WTC11 (cell line): ENCODE measurements at regions of chr22 and their contacts with region 1.

Region 1: DNA sequence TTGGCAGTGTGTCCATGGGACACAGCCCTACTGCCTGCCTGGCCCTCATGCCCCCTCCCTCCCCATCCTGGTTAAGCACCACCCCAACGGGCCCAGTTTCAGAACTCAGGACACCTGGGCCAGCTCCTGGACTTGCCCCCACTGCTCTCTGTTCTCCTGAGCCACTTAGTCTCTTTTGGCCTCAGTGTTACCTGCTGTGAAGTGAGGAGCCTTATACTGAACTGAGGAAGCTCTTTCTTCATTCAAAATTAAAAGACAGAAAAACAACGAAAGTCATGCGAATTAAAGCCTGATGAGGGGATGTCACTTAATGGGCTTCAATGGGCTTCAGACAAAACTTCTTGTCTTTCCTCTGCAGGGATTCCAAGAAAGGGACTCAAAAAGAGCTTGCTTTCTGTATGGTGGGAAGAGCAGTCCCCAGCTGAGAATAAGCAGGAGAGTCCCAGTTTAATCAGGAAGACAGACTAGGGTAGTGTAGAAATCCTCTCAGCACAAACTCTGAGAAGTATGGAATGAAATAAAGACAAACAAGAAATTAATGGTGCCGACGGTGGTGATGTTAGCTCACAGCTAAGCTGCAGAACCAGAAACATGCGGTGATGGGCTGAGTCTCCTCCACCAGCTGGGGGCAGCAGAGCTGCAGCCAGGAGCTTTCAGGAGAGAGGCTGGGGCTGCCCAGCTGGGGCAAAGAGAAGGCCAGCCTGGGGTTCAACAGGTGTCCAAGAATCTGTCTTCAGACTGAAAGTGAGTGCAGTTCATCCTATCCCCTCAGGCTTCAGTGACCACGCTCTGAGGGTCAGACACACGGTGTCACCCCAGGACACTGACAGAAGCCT is 101.0 kb downstream of the GGTLC2 start:
- DNase-seq: peak; percentile 74
- ATAC-seq: peak; percentile 86
- H3K4me3 Mint-ChIP-seq: no peak overlapping the region
- H3K27ac Mint-ChIP-seq: no peak overlapping the region
- H3K4me1 Mint-ChIP-seq: peaks cover 19% of the 10 kb centered on the region
- H3K27me3 Mint-ChIP-seq: peaks cover 91% of the 10 kb centered on the region
- CTCF ChIP-seq: peak; percentile 35; the same call in 1 of the 2 replicates

Region 2: GRCh38 chr22:22576244-22576988 is 169.0 kb before region 1 on chr22:
- CTCF ChIA-PET with region 1: interaction called, 11 read pairs
- POLR2A ChIA-PET with region 1: no interaction called
- DNase-seq: peak; percentile 84
- ATAC-seq: peak; percentile 96
- H3K4me3 Mint-ChIP-seq: no peak overlapping the region
- H3K27ac Mint-ChIP-seq: no peak overlapping the region
- H3K4me1 Mint-ChIP-seq: no peaks in the 10 kb centered on the region
- H3K27me3 Mint-ChIP-seq: peaks cover 97% of the 10 kb centered on the region
- CTCF ChIP-seq: peak; percentile 72

Region 3: GRCh38 chr22:22609291-22609690 is 136.2 kb before region 1 on chr22:
- CTCF ChIA-PET with region 1: no interaction called
- POLR2A ChIA-PET with region 1: no interaction called
- DNase-seq: no peak
- ATAC-seq: no peak
- H3K4me3 Mint-ChIP-seq: no peak overlapping the region
- H3K27ac Mint-ChIP-seq: no peak overlapping the region
- H3K4me1 Mint-ChIP-seq: peaks cover 9% of the 10 kb centered on the region
- H3K27me3 Mint-ChIP-seq: peaks cover 95% of the 10 kb centered on the region
- CTCF ChIP-seq: no peak

Region 4: GRCh38 chr22:22710719-22711531 is 34.5 kb before region 1 on chr22:
- CTCF ChIA-PET with region 1: interaction called, 21 read pairs
- POLR2A ChIA-PET with region 1: no interaction called
- DNase-seq: peak; percentile 83
- ATAC-seq: peak; percentile 77
- H3K4me3 Mint-ChIP-seq: no peak overlapping the region
- H3K27ac Mint-ChIP-seq: no peak overlapping the region
- H3K4me1 Mint-ChIP-seq: no peaks in the 10 kb centered on the region
- H3K27me3 Mint-ChIP-seq: peaks cover 99% of the 10 kb centered on the region
- CTCF ChIP-seq: peak; percentile 96

Region 5: DNA sequence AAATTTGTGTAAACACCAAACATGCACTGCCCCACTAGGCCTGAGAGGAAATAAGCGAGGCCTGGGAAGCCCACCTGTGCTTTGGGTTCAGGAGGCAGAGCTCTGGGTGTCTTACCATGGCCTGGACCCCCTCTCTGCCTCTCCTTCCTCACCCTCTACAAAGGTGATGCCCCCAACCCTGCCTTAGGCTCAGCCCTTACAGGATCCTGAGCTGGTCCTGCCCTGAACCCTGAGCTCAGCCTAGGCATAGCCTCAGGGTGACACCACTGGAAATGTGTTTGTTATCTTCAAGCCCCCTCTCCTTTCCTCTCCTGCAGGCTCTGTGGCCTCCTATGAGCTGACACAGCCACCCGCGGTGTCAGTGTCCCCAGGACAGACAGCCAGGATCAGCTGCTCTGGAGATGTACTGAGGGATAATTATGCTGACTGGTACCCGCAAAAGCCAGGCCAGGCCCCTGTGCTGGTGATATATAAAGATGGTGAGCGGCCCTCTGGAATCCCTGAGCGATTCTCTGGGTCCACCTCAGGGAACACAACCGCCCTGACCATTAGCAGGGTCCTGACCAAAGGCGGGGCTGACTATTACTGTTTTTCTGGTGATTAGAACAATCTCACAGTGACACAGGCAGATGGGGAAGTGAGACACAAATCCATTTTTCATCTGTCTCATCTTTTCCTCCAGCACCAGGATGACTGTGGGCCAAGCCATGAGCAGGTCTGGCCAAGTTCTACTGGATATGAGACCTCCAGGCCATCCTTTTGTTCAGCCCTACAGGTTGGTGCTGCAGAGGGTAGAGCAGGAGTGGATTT is 16.7 kb after region 1 on chr22:
- CTCF ChIA-PET with region 1: interaction called, 10 read pairs
- POLR2A ChIA-PET with region 1: no interaction called
- DNase-seq: no peak
- ATAC-seq: no peak
- H3K4me3 Mint-ChIP-seq: no peak overlapping the region
- H3K27ac Mint-ChIP-seq: no peak overlapping the region
- H3K4me1 Mint-ChIP-seq: no peaks in the 10 kb centered on the region
- H3K27me3 Mint-ChIP-seq: peaks cover 96% of the 10 kb centered on the region
- CTCF ChIP-seq: no peak

Region 6: DNA sequence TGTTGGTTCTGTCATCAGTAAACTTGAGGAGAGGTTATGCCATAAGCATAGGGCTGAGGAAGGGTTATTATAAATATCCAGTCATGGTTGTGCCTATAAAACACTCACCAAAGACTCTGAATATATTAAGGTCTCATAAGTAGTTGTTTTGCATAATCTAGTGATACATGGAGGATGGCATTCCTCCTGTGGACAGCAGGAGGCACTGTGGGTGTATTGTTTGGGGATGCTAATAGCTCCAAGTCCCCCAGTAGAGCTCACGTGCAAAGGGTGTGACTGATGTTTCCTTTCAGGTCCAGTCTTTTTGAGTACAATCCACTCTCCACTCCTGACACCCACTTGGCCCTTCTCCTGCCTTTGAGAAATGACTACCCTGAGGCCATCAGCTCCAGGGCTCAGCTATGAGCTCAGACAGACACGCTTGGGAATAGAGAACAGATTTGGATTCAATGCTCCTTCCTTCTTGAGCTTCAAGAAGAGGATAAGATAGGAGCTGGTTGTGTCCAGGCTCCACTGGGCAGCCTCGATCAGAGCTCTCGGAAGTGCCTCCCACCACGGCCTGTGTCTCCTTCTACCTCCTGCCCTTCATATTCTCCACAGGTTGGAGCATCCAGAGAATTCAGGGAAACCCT is 57.0 kb after region 1 on chr22:
- CTCF ChIA-PET with region 1: interaction called, 12 read pairs
- POLR2A ChIA-PET with region 1: no interaction called
- DNase-seq: no peak
- ATAC-seq: peak; percentile 62
- H3K4me3 Mint-ChIP-seq: no peak overlapping the region
- H3K27ac Mint-ChIP-seq: no peak overlapping the region
- H3K4me1 Mint-ChIP-seq: peaks cover 5% of the 10 kb centered on the region; the same call in 1 of the 2 replicates
- H3K27me3 Mint-ChIP-seq: peaks cover 94% of the 10 kb centered on the region
- CTCF ChIP-seq: no peak

Region 7: GRCh38 chr22:22877523-22878210 is 132.2 kb after region 1 on chr22:
- CTCF ChIA-PET with region 1: interaction called, 11 read pairs
- POLR2A ChIA-PET with region 1: no interaction called
- DNase-seq: peak; percentile 85
- ATAC-seq: peak; percentile 83
- H3K4me3 Mint-ChIP-seq: no peak overlapping the region
- H3K27ac Mint-ChIP-seq: no peak overlapping the region
- H3K4me1 Mint-ChIP-seq: no peaks in the 10 kb centered on the region
- H3K27me3 Mint-ChIP-seq: peaks cover 79% of the 10 kb centered on the region
- CTCF ChIP-seq: peak; percentile 78